ENCODE measurements at regions of chr11 and their contacts with region 1.

Region 1: DNA sequence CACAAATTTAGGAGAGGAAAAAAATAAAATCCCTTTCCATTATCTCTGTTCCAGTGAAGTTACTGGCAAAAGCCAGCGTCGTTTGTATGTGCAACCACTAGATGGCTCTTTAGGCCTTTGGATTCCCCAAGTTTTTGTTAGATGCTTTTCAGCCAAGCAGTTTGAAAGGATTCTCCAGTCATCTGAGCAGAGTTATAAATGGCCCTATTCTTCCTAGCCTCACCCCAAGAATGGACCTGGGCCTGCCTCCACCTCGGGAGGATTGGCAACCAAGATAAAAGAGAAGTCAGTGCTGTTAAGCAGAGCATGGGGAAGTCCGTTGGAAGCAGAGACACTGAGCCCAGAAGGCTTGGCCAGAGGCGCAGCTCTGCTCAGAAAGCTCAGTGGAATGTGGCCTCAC is 15.4 kb downstream of the FAM181B start:
- DNase-seq: peak; percentile 7
- H3K4me3 ChIP-seq: no peak overlapping the region
- CTCF ChIP-seq: peak; percentile 58

Region 2: GRCh38 chr11:82701847-82702520 is 16.3 kb before region 1 on chr11:
- CTCF ChIA-PET with region 1: interaction called, 15 read pairs
- POLR2A ChIA-PET with region 1: no interaction called
- DNase-seq: no peak
- H3K4me3 ChIP-seq: no peak overlapping the region
- CTCF ChIP-seq: peak; percentile 52

Region 3: GRCh38 chr11:82756765-82757639 is 38.7 kb after region 1 on chr11:
- CTCF ChIA-PET with region 1: no interaction called
- POLR2A ChIA-PET with region 1: no interaction called
- DNase-seq: no peak
- H3K4me3 ChIP-seq: no peak overlapping the region
- CTCF ChIP-seq: no peak

Region 4: DNA sequence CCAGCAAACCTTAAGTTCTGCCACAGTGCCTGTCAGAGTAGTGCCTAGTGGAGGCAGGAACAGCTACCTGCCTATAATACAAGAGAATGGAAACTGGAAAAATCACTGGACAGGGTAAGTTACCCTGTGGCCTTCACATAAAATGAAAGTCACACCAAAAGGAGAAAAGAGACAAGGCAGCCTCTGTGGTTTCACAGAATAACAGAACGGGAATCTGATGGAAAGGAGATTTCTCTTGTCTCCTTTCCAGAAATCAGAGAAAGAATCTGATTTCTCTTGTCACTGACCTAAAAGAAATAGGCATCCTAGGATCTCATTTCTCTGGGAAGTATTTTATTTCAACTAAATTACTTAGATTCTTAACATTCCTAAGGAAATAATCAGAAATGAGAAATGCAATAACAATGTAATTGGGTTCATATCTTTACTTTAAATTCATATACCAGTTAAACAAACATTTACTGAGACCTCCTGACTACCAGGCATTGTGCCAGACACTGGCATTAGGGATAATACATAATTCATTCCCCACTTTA is 140.3 kb after region 1 on chr11:
- CTCF ChIA-PET with region 1: interaction called, 35 read pairs
- POLR2A ChIA-PET with region 1: no interaction called
- DNase-seq: peak; percentile 49
- H3K4me3 ChIP-seq: no peak overlapping the region
- CTCF ChIP-seq: no peak

Region 5: GRCh38 chr11:82900277-82901164 is 182.2 kb after region 1 on chr11 and contains the start of gene PRCP:
- CTCF ChIA-PET with region 1: interaction called, 11 read pairs
- POLR2A ChIA-PET with region 1: no interaction called
- DNase-seq: peak; percentile 31
- H3K4me3 ChIP-seq: peak within 1 kb of the TSS; percentile 86
- CTCF ChIP-seq: no peak